CD8-positive, alpha-beta T cell (primary cell): ENCODE measurements at regions of chr4 and their contacts with region 1.

Region 1: DNA sequence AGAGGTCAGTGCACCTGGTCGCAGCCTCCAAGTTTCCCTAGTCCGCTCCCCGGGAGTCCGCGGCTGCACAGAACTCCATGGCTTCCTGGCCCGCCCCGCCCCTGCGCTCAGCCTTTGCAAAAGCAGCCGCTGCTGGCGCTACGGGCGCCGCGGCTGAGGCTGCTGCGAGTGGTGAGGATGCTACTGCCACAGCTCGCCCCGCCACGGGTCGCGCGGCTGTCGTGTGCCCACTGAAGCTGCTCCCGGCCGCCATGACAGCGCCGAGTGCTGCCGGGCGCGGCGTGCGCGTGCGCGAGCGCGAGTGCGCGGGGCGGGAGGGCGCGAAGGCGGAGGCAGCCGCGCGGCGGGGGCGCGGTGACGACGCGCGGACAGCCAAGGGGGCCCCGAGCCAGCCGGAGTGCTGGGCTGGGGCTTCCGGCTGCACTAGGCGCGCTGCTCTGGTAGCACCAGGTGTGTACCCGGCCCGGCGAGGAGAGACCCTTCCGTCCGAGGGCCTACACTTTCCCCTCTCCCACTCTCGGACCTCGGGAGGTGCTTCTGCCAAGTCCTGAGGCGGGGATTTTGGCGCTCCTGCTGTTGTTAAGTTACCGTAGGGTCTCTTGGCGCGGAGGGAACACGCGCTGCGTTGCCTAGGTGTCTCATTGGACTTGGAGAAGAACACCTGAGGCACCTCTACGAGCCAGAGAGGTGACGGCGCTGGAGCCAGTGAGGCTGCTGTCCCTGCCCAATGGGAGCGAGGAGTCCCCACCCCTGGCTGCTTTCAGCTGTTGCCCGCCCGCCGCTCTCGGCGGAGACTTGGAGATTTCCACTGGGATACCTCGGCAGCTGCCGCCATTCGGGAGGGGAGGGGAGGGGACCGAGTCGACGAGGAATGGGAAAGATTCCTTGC is 619 bp upstream of the LRBA start:
- DNase-seq: peak; percentile 68 to 95 (median 81)
- ATAC-seq: peak; percentile 74
- H3K4me3 ChIP-seq: peak overlapping the region; percentile 89 to 96
- H3K4me3 Mint-ChIP-seq: peak overlapping the region; percentile 100
- H3K27ac ChIP-seq: peak overlapping the region; percentile 96 to 97
- H3K27ac Mint-ChIP-seq: peak overlapping the region; percentile 99
- H3K4me1 ChIP-seq: peaks cover 16% of the 10 kb centered on the region
- H3K4me1 Mint-ChIP-seq: peaks cover 33% of the 10 kb centered on the region
- H3K27me3 ChIP-seq: no peaks in the 10 kb centered on the region
- H3K27me3 Mint-ChIP-seq: no peaks in the 10 kb centered on the region
- CTCF ChIP-seq: no peak

Region 2: GRCh38 chr4:150960818-150961217 is 54.9 kb before region 1 on chr4:
- CTCF ChIA-PET with region 1: no interaction called
- POLR2A ChIA-PET with region 1: no interaction called
- intact Hi-C with region 1: no loop called
- DNase-seq: peak in 5 of 9 experiments; percentile 4 to 50 (median 26)
- ATAC-seq: peak; percentile 55
- H3K4me3 ChIP-seq: no peak overlapping the region
- H3K4me3 Mint-ChIP-seq: no peak overlapping the region
- H3K27ac ChIP-seq: no peak overlapping the region
- H3K27ac Mint-ChIP-seq: no peak overlapping the region
- H3K4me1 ChIP-seq: no peaks in the 10 kb centered on the region
- H3K4me1 Mint-ChIP-seq: peaks cover 40% of the 10 kb centered on the region
- H3K27me3 ChIP-seq: no peaks in the 10 kb centered on the region
- H3K27me3 Mint-ChIP-seq: no peaks in the 10 kb centered on the region
- CTCF ChIP-seq: peak; percentile 42

Region 3: GRCh38 chr4:150976478-150977118 is 39.1 kb before region 1 on chr4:
- CTCF ChIA-PET with region 1: no interaction called
- POLR2A ChIA-PET with region 1: no interaction called
- intact Hi-C with region 1: no loop called
- DNase-seq: no peak
- ATAC-seq: no peak
- H3K4me3 ChIP-seq: no peak overlapping the region
- H3K4me3 Mint-ChIP-seq: no peak overlapping the region
- H3K27ac ChIP-seq: no peak overlapping the region
- H3K27ac Mint-ChIP-seq: no peak overlapping the region
- H3K4me1 ChIP-seq: peaks cover 6% of the 10 kb centered on the region
- H3K4me1 Mint-ChIP-seq: peaks cover 77% of the 10 kb centered on the region
- H3K27me3 ChIP-seq: no peaks in the 10 kb centered on the region
- H3K27me3 Mint-ChIP-seq: no peaks in the 10 kb centered on the region
- CTCF ChIP-seq: no peak

Region 4: DNA sequence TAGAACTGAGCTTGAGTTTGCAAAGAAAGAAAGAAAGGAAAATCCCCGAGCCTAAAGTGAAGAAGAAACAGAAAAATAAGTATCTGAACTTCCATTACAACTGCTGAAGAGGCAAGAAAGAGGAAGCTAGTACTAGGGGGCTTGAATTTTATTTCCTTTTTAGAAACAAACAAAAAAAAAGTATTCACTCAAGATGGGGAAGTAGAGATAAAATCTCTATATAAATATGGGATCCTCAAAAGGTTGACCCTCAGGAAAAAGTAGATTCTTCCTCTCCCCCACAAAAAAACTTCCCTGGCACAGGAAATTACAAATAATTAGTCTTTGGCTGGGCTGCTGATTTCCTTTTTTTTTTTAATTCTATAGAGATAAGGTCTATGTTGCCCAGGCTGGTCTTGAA is 16.6 kb before region 1 on chr4:
- CTCF ChIA-PET with region 1: no interaction called
- POLR2A ChIA-PET with region 1: no interaction called
- intact Hi-C with region 1: no loop called
- DNase-seq: no peak
- ATAC-seq: no peak
- H3K4me3 ChIP-seq: no peak overlapping the region
- H3K4me3 Mint-ChIP-seq: no peak overlapping the region
- H3K27ac ChIP-seq: no peak overlapping the region
- H3K27ac Mint-ChIP-seq: no peak overlapping the region
- H3K4me1 ChIP-seq: peaks cover 13% of the 10 kb centered on the region
- H3K4me1 Mint-ChIP-seq: peaks cover 73% of the 10 kb centered on the region
- H3K27me3 ChIP-seq: no peaks in the 10 kb centered on the region
- H3K27me3 Mint-ChIP-seq: no peaks in the 10 kb centered on the region
- CTCF ChIP-seq: no peak

Region 5: GRCh38 chr4:151408630-151409469 is 393.1 kb after region 1 on chr4 and contains the start of gene FHIP1A:
- CTCF ChIA-PET with region 1: no interaction called
- POLR2A ChIA-PET with region 1: no interaction called
- intact Hi-C with region 1: loop called (anchors 2 to 10 kb)
- DNase-seq: peak; percentile 60 to 87 (median 82)
- ATAC-seq: peak; percentile 96
- H3K4me3 ChIP-seq: peak within 1 kb of the TSS; percentile 60 to 66
- H3K4me3 Mint-ChIP-seq: peak within 1 kb of the TSS; percentile 93
- H3K27ac ChIP-seq: peak within 1 kb of the TSS in 1 of 2 experiments; percentile 24
- H3K27ac Mint-ChIP-seq: peak within 1 kb of the TSS; percentile 67
- H3K4me1 ChIP-seq: peaks cover 17% of the 10 kb centered on the region
- H3K4me1 Mint-ChIP-seq: peaks cover 25% of the 10 kb centered on the region
- H3K27me3 ChIP-seq: no peaks in the 10 kb centered on the region
- H3K27me3 Mint-ChIP-seq: peaks cover 18% of the 10 kb centered on the region
- CTCF ChIP-seq: no peak
- total RNA-seq, gene FHIP1A: 1.5 to 2.1 TPM

Region 6: DNA sequence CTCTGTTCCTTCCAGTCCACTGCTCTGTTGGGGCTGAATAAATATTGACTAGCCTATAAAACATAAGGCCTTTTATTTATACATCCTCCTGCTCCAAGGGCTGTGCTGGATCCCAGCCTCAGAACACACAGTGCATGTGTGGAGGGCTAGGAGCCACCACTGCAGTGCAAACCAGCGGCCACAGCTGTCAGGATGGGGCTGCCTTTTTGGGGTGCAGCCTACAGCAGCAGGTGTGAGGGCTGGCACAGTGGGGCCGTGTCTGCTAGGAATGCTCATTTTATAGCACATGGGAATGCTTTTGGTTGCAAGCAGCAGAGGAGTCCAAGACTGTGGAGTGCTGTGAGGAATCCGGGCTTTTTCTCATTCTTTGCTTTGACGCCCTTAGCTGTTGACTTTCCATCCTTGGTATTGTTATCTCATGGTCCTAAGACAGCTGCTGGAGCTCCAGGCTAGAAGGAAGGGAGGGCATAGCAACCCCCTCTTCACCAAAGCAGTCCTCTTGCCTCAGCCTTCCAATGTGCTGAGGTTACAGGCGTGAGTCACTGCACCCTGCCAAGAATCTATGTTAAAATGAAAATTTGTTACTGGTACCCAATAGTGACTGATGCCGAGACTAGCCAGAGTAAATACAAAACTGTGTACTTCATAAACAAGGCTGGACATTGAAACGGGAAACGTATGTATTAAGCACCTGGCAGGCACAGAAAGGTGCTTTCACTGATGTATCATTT is 1079.4 kb after region 1 on chr4:
- CTCF ChIA-PET with region 1: no interaction called
- POLR2A ChIA-PET with region 1: no interaction called
- intact Hi-C with region 1: loop called in 1 of 2 experiments (anchors 10 kb)
- DNase-seq: no peak
- ATAC-seq: no peak
- H3K4me3 ChIP-seq: no peak overlapping the region
- H3K4me3 Mint-ChIP-seq: no peak overlapping the region
- H3K27ac ChIP-seq: no peak overlapping the region
- H3K27ac Mint-ChIP-seq: peak overlapping the region; percentile 90
- H3K4me1 ChIP-seq: peaks cover 70% of the 10 kb centered on the region
- H3K4me1 Mint-ChIP-seq: peaks cover 77% of the 10 kb centered on the region
- H3K27me3 ChIP-seq: no peaks in the 10 kb centered on the region
- H3K27me3 Mint-ChIP-seq: no peaks in the 10 kb centered on the region
- CTCF ChIP-seq: no peak